IMR-90 (cell line): ENCODE measurements at regions of chr9 and their contacts with region 1.

Region 1: GRCh38 chr9:16985559-16986348 is 115.3 kb upstream of the BNC2 start:
- DNase-seq: peak; percentile 93
- ATAC-seq: peak; percentile 79
- H3K4me3 ChIP-seq: peak overlapping the region; percentile 0; the same call in 1 of the 2 replicates
- H3K27ac ChIP-seq: peak overlapping the region; percentile 88
- H3K4me1 ChIP-seq: peaks cover 16% of the 10 kb centered on the region
- H3K27me3 ChIP-seq: no peaks in the 10 kb centered on the region
- CTCF ChIP-seq: no peak
- POLR2A ChIP-seq: peak; percentile 66; the same call in 1 of the 2 replicates
- RAD21 ChIP-seq: no peak; the same call in 1 of the 2 replicates

Region 2: DNA sequence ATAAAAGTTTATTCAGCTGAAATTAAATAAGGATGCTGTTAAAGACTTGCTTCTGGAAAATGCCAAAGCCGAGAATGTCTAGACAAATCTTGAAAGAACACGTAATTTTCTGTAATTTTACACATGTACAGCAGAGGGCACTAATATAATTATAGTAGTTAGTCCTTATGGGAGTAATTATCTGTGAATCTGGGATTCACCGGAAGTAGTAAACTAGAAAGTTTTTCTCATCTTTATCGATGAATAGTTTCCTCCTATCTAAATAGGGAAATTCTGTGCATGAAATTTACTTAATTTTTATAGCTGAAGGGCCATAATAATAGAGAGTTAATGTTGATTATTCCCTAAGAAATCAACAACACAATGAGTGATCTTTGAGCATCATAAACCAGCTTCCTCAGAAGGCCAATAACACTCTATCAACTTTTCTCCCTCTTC is 130.7 kb after region 1 on chr9:
- CTCF ChIA-PET with region 1: no interaction called
- POLR2A ChIA-PET with region 1: no interaction called
- dilution Hi-C with region 1: no loop called
- in situ Hi-C with region 1: no loop called
- intact Hi-C with region 1: loop called (anchors 5 kb)
- DNase-seq: peak; percentile 54
- ATAC-seq: peak; percentile 77
- H3K4me3 ChIP-seq: no peak overlapping the region
- H3K27ac ChIP-seq: no peak overlapping the region
- H3K4me1 ChIP-seq: no peaks in the 10 kb centered on the region
- H3K27me3 ChIP-seq: no peaks in the 10 kb centered on the region
- CTCF ChIP-seq: peak; percentile 50
- POLR2A ChIP-seq: no peak
- RAD21 ChIP-seq: peak; percentile 39